Right lobe of liver (tissue), 6 donors: ENCODE measurements at regions of chr12 and their contacts with region 1.

Region 1: DNA sequence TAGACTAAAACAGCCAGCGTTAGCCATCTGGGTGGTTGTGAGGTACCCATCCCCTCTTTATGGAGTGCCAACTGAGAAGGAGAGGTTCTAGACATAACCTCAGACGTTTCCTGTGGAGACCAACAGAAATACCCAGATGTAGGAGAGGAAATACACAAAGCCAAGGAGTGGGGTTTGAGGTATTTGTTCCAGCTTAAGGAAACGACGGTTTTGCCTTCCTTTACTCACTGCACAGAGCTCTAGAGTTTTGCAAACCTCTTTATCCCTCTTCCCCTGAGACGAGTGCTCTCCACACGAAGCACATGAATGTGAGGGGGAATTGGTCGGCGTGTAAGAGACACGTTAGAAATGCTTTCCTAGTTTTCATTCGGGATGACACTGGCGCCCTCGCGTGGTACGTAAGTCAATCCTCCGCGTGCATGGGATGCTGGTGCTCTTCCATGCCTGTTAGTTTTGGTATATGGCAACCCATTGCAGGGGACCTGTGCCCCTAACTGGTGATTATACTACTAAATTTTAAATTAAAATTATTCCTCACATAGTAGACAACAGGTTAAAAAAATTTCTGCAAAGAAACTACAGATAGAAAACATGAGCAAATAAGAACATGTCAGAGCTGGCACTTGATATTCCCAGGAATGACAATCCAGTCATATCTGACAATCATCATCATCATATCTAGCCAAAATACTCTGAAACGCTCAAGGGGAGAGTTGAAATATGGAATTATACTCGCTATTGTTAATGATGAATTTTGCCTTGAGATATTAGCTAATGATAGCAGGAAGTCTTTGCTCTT is 121.7 kb downstream of the PPM1H start:
- DNase-seq: peak; percentile 57 to 70 (median 58)
- ATAC-seq: peak; percentile 90 to 95 (median 94)
- H3K4me3 ChIP-seq: no peak overlapping the region
- H3K27ac ChIP-seq: no peak overlapping the region
- H3K4me1 ChIP-seq: no peaks in the 10 kb centered on the region
- H3K27me3 ChIP-seq: no peaks in the 10 kb centered on the region
- CTCF ChIP-seq: peak; percentile 32 to 80 (median 74)
- POLR2A ChIP-seq: no peak

Region 2: DNA sequence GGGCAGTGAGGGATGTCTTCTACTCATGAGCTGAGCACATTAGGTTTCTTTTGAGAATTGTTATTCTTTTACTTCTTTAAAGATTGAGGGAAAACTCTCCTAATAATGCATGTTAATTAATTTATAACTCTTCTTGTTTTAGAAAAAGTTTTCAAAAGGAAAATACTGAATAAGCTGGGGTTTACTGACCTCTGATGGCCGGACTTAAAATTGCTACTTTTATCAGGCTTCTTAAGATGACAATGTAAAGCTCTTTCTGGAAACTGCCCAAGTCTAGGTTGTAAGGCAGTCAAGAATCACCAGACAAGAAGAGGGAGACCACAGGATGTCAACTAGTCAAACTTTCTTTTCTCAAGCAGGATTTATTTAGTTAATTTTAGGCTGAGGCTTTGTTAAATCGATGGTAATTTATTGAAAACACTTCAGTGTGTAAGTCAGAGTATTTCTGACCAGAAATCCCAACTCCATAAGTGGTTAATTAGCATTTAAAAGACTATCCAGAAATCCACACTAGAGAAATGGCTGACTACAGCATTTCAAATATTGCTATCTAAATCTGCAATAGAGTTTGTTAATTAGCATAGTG is 255.7 kb after region 1 on chr12:
- intact Hi-C with region 1: loop called in 1 of 2 experiments (anchors 10 kb)
- DNase-seq: no peak
- ATAC-seq: peak; percentile 26 to 64 (median 50)
- H3K4me3 ChIP-seq: no peak overlapping the region
- H3K27ac ChIP-seq: no peak overlapping the region
- H3K4me1 ChIP-seq: no peaks in the 10 kb centered on the region
- H3K27me3 ChIP-seq: no peaks in the 10 kb centered on the region
- CTCF ChIP-seq: peak; percentile 39 to 61 (median 58)
- POLR2A ChIP-seq: no peak